ENCODE measurements at regions of chr12 and their contacts with region 1.

Region 1: DNA sequence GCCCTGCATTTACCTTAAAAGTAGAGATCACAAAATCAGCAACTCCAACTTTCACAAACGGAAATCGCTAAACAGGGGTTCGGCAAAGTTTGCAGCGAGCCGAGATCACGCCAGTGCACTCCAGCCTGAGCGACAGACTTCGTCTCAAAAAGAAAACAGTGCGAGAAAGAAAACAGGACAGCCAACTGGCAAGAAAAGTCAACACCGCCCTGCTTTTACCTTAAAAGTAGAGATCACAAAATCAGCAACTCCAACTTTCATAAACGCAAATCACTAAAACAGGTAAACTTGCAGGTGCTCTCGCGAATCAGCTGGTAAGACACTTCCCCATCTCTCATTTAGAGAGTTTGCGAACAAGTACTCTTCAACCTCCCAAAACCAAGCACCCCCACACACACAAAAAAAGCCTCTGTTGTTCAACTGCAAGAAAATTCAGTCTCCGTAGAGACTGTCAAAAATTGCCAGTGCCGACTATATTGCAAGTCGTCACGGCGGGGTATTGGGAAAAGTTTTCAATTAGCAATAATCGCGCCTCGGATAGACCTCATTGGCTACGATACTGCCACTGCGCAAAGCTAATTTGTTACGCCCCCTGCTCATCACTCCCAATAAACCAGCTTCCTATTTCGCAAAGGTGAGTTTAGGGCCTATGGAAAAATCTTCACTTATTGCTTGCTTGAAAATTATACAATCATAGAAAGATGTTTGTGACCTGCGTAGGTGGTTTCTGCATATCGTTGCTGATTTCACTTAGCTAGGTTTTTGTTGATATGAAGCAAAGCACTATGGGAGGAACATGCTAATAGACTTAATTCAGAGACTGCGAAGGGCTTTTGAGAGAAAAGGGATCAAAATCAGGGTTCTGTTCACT is at the start of gene RNU4-1:
- DNase-seq: peak; percentile 84
- H3K4me3 Mint-ChIP-seq: no peak within 1 kb of the TSS
- H3K27ac Mint-ChIP-seq: no peak within 1 kb of the TSS
- H3K4me1 Mint-ChIP-seq: peaks cover 12% of the 10 kb centered on the region
- H3K27me3 Mint-ChIP-seq: peaks cover 7% of the 10 kb centered on the region
- total RNA-seq, gene RNU4-1: 1,910 to 2,156 TPM

Region 2: DNA sequence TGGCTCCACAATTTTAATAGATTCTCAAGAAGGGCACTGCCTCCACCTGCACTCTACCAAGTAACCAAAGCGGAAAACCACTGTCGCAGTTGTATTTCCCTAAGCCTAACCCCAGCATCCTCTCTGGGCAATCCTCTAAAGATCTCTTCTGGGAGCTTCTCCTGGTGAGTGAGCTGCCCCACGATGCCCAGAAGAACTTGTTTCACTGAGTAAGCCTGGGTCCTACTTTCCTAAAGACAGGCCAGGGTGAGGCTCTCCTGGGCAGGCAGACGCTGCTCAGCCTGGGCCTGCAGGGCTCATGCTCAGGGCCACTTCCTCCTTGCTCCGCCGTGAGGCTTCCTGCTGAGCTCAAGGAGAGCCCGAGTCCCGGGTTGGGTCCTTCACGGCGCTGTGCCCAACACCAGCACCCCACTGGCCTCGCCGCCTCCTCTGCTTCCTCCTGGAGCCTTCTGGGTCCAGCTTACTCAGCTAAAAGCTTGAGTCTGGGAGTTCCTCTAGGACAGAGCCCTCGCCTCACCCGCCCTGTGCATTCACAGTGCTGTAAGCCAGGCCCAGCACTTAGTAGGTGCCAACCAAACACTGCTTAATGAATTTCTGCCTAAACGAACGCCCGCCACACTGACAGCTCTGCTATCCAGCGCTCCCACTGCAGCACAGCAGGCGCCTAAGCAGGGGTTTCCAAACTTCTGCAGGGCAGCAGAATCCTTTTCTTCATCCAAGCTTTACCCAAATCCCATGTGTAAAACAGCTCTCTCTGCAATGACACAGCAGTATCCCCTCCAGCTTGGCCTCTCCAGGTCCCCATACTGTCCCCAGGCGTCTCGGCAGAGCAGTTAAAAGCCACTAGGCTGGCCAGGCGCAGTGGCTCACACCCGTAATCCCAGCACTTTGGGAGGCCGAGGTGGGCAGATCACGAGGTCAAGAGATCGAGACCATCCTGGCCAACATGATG is 182.1 kb before region 1 on chr12:
- CTCF ChIA-PET with region 1: no interaction called
- POLR2A ChIA-PET with region 1: interaction called, 159 read pairs
- DNase-seq: peak; percentile 66
- H3K4me3 Mint-ChIP-seq: peak overlapping the region; percentile 66
- H3K27ac Mint-ChIP-seq: peak overlapping the region; percentile 91
- H3K4me1 Mint-ChIP-seq: peaks cover 78% of the 10 kb centered on the region
- H3K27me3 Mint-ChIP-seq: no peaks in the 10 kb centered on the region

Region 3: DNA sequence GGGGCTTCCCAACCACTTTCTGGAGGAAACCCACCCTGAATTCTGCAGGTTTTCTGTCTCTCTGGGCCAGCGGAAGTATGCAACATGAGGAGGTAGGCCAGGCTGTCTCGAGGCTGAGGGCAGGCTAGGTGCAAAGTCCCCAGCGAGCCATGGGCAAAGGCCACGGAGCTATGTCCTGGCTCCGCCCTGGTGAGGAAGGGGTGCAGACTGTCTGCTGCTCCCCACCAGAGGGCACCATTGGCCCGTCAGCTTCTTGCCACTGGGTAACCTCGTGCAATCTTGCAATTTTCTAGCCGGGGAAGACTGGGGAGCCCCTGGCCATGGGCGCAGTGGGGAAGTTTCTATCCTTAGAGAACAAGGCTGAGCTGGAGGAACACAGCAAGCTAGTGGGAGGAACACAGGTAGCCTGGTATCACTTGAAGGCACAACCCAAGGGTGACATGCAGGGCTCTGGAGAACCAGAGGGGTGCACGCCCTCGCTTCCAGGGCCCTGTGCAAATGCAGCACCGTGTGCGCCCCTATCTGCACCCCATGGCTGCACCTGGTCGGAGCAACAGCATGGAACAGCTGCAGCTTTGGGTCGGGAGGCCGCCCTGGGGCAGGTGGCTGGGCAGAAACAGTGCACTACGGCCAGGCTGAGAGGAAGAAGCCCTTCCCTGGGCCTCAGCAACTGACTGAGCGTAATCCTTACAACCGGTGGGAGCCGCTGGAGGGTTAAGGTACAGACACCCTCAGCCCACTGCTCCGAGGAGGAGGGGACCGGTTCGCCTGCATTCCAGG is 64.4 kb before region 1 on chr12:
- CTCF ChIA-PET with region 1: interaction called, 81 read pairs
- POLR2A ChIA-PET with region 1: interaction called, 330 read pairs
- DNase-seq: peak; percentile 91
- H3K4me3 Mint-ChIP-seq: peak overlapping the region; percentile 47
- H3K27ac Mint-ChIP-seq: peak overlapping the region; percentile 77
- H3K4me1 Mint-ChIP-seq: peaks cover 85% of the 10 kb centered on the region
- H3K27me3 Mint-ChIP-seq: no peaks in the 10 kb centered on the region

Region 4: DNA sequence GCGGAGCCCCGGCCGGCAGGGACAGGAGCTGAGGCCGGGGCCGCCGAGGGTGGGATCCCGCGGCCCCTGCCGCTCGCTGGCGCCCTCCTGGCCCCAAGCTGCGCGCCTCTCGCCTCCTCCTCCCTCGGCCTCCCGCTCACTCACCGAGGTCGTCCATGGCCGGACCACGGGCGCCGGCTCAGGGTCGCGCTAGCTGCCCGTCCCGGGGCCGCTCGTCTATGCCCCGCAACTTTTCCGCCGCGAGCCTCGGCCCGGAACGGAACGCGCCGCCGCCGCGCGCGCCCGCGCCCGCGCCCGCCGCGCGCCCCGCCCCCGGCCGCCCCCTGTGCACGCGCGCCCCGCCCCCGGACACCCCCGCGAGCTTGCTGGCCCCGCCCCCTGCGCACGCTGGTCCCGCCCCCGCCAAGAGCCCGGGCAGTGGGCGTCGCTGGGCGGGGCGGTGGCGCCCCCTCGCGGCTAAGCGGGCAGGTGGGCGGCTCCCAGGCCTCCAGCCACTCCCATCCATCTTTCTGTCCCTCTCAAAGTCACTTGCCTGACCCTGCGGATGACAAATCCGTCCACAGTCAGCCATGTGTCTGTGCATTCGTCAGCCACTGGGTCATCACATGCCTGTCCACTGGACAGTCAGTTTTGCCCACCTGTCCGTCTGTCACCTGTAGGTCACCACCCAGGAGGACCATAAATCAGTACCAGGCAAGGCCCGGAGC is 27.3 kb before region 1 on chr12 and contains the start of gene PXN:
- CTCF ChIA-PET with region 1: interaction called, 5 read pairs
- POLR2A ChIA-PET with region 1: interaction called, 218 read pairs
- DNase-seq: peak; percentile 92
- H3K4me3 Mint-ChIP-seq: peak within 1 kb of the TSS; percentile 90
- H3K27ac Mint-ChIP-seq: peak within 1 kb of the TSS; percentile 81
- H3K4me1 Mint-ChIP-seq: peaks cover 42% of the 10 kb centered on the region
- H3K27me3 Mint-ChIP-seq: no peaks in the 10 kb centered on the region
- total RNA-seq, gene PXN: 271 to 274 TPM

Region 5: GRCh38 chr12:120437754-120438494 is 145.0 kb after region 1 on chr12 and contains the start of gene COX6A1:
- CTCF ChIA-PET with region 1: interaction called, 5 read pairs
- POLR2A ChIA-PET with region 1: interaction called, 13 read pairs
- DNase-seq: peak; percentile 98
- H3K4me3 Mint-ChIP-seq: peak within 1 kb of the TSS; percentile 91
- H3K27ac Mint-ChIP-seq: peak within 1 kb of the TSS; percentile 95
- H3K4me1 Mint-ChIP-seq: peaks cover 31% of the 10 kb centered on the region
- H3K27me3 Mint-ChIP-seq: peaks cover 2% of the 10 kb centered on the region
- total RNA-seq, gene COX6A1: 318 to 323 TPM